Calu3 (cell line): ENCODE measurements at regions of chr12 and their contacts with region 1.

Region 1: DNA sequence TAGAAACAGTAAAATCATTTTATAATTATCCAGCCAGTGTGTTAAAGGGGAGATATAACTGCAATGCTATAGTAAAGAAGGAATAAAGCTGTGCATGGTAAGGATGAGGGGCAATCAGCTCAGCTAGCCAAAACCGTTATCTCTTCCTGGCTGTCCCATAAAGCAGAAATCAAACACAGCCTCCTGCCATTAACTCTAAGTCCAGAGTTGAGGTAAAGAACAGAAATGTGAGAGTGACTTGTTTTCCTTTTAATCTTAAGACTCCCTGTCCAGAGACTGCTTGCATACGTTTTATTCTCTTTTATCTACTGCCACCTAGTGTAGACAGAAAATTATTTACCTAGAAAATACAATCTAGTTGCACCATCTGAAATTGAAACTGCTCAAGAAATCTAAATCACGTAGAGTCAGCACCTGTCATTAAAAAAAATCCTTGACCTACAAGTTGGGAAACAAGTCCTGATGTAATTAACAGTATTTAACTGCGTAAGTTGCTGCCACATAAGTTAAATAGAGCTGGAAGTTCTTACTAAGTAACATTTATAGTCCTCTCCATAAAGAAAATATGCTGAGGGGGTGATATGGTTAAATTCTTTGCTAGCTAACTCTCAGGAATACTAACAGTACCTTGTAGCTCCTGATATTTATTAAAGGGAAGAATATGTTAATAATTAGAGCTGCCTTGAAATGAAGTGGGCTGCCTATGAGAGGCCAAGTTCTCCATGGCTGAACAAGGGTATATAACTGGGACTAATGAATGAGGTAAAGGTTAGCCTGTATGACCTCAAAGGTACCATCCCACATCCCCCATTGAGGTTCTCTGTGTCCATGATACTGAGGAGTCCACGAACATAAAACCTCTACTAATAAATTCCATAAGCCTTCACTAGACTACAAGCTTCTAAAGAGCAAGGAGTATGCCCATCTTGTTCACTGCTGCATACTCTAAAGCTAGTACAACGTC is 62.7 kb downstream of the GALNT4 start:
- DNase-seq: no peak
- H3K4me3 Mint-ChIP-seq: no peak overlapping the region
- H3K27ac Mint-ChIP-seq: no peak overlapping the region
- H3K4me1 Mint-ChIP-seq: peaks cover 29% of the 10 kb centered on the region
- H3K27me3 Mint-ChIP-seq: no peaks in the 10 kb centered on the region
- CTCF ChIP-seq: peak; percentile 32

Region 2: DNA sequence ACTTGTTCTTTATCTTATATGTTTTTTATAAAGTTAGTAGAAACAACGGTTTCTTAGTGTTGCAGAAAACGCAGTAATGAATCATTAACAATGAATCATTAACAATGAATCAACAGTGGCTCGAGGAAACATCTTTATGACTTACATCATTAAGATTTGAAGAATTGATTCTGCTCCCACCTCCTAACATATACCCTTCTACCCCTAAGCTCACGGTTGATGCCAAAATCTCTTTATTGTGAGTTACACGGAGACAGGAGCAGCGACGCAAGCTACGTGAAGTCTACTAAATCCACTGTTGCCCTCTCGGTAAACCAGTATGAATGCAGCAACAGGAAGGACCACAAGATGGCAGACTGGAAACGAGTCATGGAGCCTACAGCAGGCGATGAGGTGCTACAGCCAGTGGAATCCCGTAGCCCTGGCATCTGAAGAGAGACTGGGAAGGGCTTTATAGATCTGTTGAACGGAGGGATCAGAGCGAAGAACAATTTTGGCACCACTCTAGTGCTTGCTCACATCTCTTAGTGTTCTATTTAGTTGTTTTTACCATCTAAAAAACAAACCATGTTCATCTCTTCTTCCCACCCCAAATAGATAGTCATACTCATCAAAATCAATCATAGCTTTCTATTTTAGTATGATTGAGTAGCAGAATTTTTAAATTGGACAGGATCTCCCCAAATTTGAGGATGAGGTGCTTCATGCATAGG is 442.4 kb before region 1 on chr12:
- CTCF ChIA-PET with region 1: interaction called, 11 read pairs
- intact Hi-C with region 1: loop called (anchors 1 kb)
- DNase-seq: peak; percentile 82
- H3K4me3 Mint-ChIP-seq: no peak overlapping the region
- H3K27ac Mint-ChIP-seq: no peak overlapping the region
- H3K4me1 Mint-ChIP-seq: peaks cover 21% of the 10 kb centered on the region
- H3K27me3 Mint-ChIP-seq: no peaks in the 10 kb centered on the region
- CTCF ChIP-seq: peak; percentile 91

Region 3: GRCh38 chr12:89051065-89051677 is 410.8 kb before region 1 on chr12:
- CTCF ChIA-PET with region 1: no interaction called
- intact Hi-C with region 1: loop called (anchors 1 kb)
- DNase-seq: peak; percentile 52
- H3K4me3 Mint-ChIP-seq: no peak overlapping the region
- H3K27ac Mint-ChIP-seq: no peak overlapping the region
- H3K4me1 Mint-ChIP-seq: no peaks in the 10 kb centered on the region
- H3K27me3 Mint-ChIP-seq: no peaks in the 10 kb centered on the region
- CTCF ChIP-seq: peak; percentile 79

Region 4: GRCh38 chr12:89117448-89118034 is 344.4 kb before region 1 on chr12:
- CTCF ChIA-PET with region 1: no interaction called
- intact Hi-C with region 1: no loop called
- DNase-seq: peak; percentile 88
- H3K4me3 Mint-ChIP-seq: peak overlapping the region; percentile 41
- H3K27ac Mint-ChIP-seq: peak overlapping the region; percentile 87
- H3K4me1 Mint-ChIP-seq: peaks cover 27% of the 10 kb centered on the region
- H3K27me3 Mint-ChIP-seq: no peaks in the 10 kb centered on the region
- CTCF ChIP-seq: no peak

Region 5: DNA sequence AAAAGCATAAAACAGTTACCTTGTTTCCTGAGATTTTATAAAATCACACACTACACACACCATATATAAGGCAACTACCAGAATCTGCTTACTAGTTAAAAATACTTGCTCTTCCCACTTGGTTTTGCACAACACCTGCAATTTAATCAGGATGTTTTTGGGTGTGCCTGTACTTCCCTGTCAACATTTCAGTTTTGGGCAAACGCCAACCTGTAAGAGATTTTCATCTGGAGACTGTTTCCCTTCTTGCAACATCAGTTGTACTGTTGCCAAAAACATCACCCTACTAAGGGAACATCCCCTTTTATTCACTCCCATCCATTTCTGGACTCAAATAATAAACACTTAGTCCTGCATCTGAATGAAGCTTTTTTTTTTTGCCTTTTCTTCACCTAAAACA is 281.9 kb before region 1 on chr12:
- CTCF ChIA-PET with region 1: no interaction called
- intact Hi-C with region 1: loop called (anchors 10 kb)
- DNase-seq: peak; percentile 71
- H3K4me3 Mint-ChIP-seq: peak overlapping the region; percentile 3
- H3K27ac Mint-ChIP-seq: peak overlapping the region; percentile 40
- H3K4me1 Mint-ChIP-seq: peaks cover 32% of the 10 kb centered on the region
- H3K27me3 Mint-ChIP-seq: no peaks in the 10 kb centered on the region
- CTCF ChIP-seq: no peak

Region 6: DNA sequence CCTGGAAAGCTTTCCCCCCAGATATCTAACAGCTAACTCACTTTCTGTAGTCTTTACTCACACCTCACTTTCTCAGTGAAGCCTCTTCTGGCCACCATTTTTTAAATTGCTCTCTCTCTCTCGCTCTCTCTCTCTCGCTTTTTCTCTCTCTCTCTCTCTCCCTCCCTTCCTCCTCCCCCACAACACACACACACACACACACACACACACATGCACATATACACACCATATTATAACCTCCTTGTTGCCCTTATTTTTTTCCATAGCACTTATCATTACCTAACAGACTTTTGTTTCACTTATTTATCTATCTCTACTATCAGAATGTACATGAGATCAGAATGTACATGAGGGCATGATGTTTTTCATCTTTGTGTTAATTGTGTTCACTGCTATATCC is 266.5 kb before region 1 on chr12:
- CTCF ChIA-PET with region 1: no interaction called
- intact Hi-C with region 1: no loop called
- DNase-seq: no peak
- H3K4me3 Mint-ChIP-seq: no peak overlapping the region
- H3K27ac Mint-ChIP-seq: no peak overlapping the region
- H3K4me1 Mint-ChIP-seq: no peaks in the 10 kb centered on the region
- H3K27me3 Mint-ChIP-seq: no peaks in the 10 kb centered on the region
- CTCF ChIP-seq: no peak

Region 7: DNA sequence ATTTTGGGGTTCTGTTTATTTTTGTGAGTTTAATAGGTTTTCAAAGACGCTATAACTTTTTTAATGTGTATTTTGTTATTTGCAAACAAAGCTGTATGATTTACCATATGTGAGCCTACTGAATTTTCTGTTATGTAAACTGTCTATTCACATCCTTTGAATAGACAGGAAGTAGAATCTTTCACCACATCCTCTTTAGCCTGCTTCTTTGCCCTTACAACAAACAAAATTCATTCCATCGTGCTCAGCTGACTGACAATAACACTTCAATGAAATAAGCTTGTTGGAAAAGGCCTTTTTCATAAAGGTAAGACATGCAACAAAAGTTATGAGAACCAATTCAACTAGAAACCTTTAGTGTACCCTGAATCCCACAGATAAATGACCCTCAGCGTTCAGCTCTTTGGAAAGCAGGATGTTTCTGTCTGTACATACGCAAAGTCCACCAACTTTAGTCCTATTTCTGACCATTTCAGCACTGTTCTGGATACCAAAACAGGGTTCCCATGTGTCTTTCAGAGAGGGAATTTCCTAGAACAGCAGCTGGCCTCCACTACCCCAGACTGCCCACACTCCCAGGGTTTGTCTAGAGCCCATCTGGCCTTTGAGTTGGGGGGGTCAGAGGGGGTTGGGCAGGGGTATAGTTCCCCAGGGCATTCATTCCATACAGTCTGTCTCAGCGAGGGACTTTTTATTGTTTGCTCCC is 180.9 kb before region 1 on chr12:
- CTCF ChIA-PET with region 1: no interaction called
- intact Hi-C with region 1: loop called (anchors 10 kb)
- DNase-seq: no peak
- H3K4me3 Mint-ChIP-seq: no peak overlapping the region
- H3K27ac Mint-ChIP-seq: no peak overlapping the region
- H3K4me1 Mint-ChIP-seq: no peaks in the 10 kb centered on the region
- H3K27me3 Mint-ChIP-seq: no peaks in the 10 kb centered on the region
- CTCF ChIP-seq: no peak

Region 8: GRCh38 chr12:89821901-89822300 is 360.0 kb after region 1 on chr12:
- CTCF ChIA-PET with region 1: no interaction called
- intact Hi-C with region 1: no loop called
- DNase-seq: no peak
- H3K4me3 Mint-ChIP-seq: no peak overlapping the region
- H3K27ac Mint-ChIP-seq: no peak overlapping the region
- H3K4me1 Mint-ChIP-seq: peaks cover 24% of the 10 kb centered on the region
- H3K27me3 Mint-ChIP-seq: no peaks in the 10 kb centered on the region
- CTCF ChIP-seq: no peak